ENCODE measurements at regions of chr20 and their contacts with region 1.

Region 1: DNA sequence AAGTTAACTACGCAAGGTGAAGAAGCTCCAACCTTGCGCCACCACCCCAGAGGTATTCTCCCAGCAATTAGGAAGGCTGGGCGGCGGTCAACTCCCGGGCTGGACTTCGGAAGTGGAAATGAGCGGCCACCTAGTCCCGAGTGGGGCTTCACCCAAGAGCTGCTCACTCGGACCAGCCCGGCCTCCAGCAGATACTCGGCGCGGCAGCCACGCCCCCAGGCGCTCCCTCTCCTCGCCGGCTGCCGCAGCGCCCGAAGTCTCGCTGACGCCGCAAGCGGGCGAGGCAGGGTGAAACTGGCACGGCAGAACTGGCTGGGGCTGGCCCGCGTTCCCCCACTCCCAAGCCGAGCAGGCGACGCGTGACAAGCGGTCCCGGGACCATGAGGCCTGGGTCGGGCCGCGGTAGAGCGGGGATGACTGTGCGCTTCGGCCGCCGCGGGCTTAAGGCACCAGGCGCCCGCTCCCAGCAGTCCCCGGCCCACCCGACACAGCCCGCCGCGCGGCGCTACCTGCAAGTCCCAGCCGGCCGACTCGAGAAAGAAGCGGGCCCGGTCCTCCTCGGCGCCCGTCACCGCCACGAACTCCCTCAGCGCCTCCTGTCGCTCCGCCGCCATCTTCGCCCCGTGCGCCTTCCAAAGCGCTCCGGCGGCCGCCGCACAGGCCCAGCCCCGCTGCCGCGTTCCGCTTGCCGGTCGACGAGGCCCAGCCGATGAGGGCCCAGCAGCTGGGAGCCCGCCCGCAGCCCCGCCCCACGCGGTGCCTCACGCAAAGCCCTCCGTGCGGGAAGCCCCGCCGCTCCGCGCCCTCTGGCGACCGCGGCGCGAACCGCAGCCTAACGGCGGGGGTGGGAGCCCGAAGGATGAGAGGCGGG is at the start of gene NSFL1C:
- DNase-seq: peak; percentile 79 to 98
- H3K4me3 ChIP-seq: peak within 1 kb of the TSS; percentile 88
- H3K27ac ChIP-seq: peak within 1 kb of the TSS; percentile 89
- H3K4me1 ChIP-seq: peaks cover 37% of the 10 kb centered on the region
- H3K27me3 ChIP-seq: no peaks in the 10 kb centered on the region
- CTCF ChIP-seq: peak; percentile 89
- total RNA-seq, gene NSFL1C: 151 and 160 TPM in 2 replicates

Region 2: GRCh38 chr20:653110-653589 is 813.3 kb before region 1 on chr20 and contains the start of gene SRXN1:
- CTCF ChIA-PET with region 1: no interaction called
- POLR2A ChIA-PET with region 1: no interaction called
- intact Hi-C with region 1: loop called (anchors 10 kb)
- DNase-seq: peak; percentile 76 to 94
- H3K4me3 ChIP-seq: peak within 1 kb of the TSS; percentile 94
- H3K27ac ChIP-seq: peak within 1 kb of the TSS; percentile 86
- H3K4me1 ChIP-seq: peaks cover 25% of the 10 kb centered on the region
- H3K27me3 ChIP-seq: no peaks in the 10 kb centered on the region
- CTCF ChIP-seq: peak; percentile 46; the same call in 1 of the 2 replicates
- total RNA-seq, gene SRXN1: 167 and 204 TPM in 2 replicates

Region 3: GRCh38 chr20:1225783-1226654 is 240.4 kb before region 1 on chr20 and contains the start of gene RAD21L1:
- CTCF ChIA-PET with region 1: no interaction called
- POLR2A ChIA-PET with region 1: no interaction called
- intact Hi-C with region 1: no loop called
- DNase-seq: peak in 1 of 2 experiments; percentile 73
- H3K4me3 ChIP-seq: peak within 1 kb of the TSS; percentile 91
- H3K27ac ChIP-seq: no peak within 1 kb of the TSS
- H3K4me1 ChIP-seq: 0 out of 2 replicates have a peak, but pooled peaks cover 3% of the 10 kb centered on the region
- H3K27me3 ChIP-seq: peaks cover 28% of the 10 kb centered on the region
- CTCF ChIP-seq: no peak
- total RNA-seq, gene RAD21L1: 0.60 TPM in 1 of 2 replicates, not detected in the other

Measured in PC-9 (cell line).